ENCODE measurements at regions of chr11 and their contacts with region 1.

Region 1: GRCh38 chr11:86291466-86292262 is 10.4 kb upstream of the HIKESHI start:
- DNase-seq: peak; percentile 88
- H3K4me3 Mint-ChIP-seq: no peak overlapping the region
- H3K27ac Mint-ChIP-seq: peak overlapping the region; percentile 53
- H3K4me1 Mint-ChIP-seq: peaks cover 58% of the 10 kb centered on the region
- H3K27me3 Mint-ChIP-seq: no peaks in the 10 kb centered on the region

Region 2: DNA sequence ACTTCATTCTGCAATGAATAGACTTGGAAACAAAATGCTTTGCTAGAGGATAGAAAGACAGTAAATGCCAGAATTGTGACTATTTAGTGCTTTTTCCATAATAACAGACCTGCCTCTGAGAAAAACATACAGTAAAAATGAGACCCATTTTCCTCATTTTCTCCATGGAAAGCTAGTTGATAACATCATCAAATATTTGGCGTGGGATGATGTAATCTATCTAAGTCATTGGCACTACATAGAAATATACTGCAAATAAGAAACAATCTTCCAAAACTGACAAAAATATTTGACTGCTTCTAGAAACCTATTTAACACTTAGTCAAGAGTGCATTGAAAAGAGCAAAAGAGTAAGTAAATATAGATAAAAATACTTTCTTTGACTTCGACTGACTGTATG is 1280.5 kb before region 1 on chr11:
- CTCF ChIA-PET with region 1: no interaction called
- intact Hi-C with region 1: no loop called
- DNase-seq: no peak
- H3K4me3 Mint-ChIP-seq: no peak overlapping the region
- H3K27ac Mint-ChIP-seq: no peak overlapping the region
- H3K4me1 Mint-ChIP-seq: no peaks in the 10 kb centered on the region
- H3K27me3 Mint-ChIP-seq: no peaks in the 10 kb centered on the region

Region 3: DNA sequence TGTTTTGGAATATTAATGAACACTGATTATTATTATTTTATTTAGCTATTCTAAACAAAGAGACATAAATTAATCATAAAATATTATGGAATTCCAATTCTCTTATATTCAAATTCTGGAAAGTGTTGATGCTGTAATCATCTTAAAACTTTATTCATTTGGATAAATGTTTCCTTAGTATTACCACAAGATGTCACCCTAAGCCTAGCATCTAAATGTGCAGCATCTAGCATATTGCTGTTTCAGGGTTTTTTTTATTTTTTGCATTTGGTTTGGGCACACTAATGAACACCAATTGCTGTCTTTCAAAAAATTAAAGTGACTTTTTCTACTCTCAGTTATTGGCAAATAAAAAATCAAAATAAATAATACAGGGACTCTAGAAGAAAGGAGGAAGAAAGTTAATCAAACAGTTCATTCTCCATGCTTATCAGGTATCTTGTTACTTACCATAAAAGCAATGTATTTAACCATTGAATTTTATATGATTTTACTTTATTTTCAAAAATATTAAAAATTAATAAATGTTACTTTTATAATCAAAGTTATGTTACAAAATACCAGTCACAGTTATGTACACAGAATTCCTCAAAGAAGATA is 696.3 kb before region 1 on chr11:
- CTCF ChIA-PET with region 1: no interaction called
- intact Hi-C with region 1: loop called (anchors 1 kb)
- DNase-seq: no peak
- H3K4me3 Mint-ChIP-seq: no peak overlapping the region
- H3K27ac Mint-ChIP-seq: no peak overlapping the region
- H3K4me1 Mint-ChIP-seq: no peaks in the 10 kb centered on the region
- H3K27me3 Mint-ChIP-seq: no peaks in the 10 kb centered on the region

Region 4: GRCh38 chr11:85779956-85780640 is 511.6 kb before region 1 on chr11:
- CTCF ChIA-PET with region 1: no interaction called
- intact Hi-C with region 1: loop called (anchors 1 kb)
- DNase-seq: no peak
- H3K4me3 Mint-ChIP-seq: no peak overlapping the region
- H3K27ac Mint-ChIP-seq: no peak overlapping the region
- H3K4me1 Mint-ChIP-seq: peaks cover 25% of the 10 kb centered on the region
- H3K27me3 Mint-ChIP-seq: no peaks in the 10 kb centered on the region

Region 5: DNA sequence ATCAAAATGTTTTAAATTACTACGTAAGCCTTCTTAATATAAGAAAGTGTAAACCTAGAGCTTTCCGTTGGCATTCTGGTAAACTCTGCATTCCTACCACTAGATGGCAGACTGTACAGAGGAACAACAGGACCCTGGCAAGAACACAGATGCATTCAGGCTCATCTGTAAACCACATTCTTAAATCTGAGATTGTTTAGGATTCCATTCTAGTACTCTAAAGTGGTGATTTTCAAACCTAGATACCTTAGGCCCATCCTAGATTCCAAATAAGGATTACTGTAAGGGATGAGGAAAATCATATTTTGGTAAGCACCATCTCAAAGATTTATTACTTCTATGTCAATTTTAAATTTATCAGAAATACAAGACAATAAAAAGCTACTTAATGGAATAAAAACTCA is 249.7 kb before region 1 on chr11:
- CTCF ChIA-PET with region 1: interaction called, 13 read pairs
- intact Hi-C with region 1: loop called (anchors 1 kb)
- DNase-seq: peak; percentile 77
- H3K4me3 Mint-ChIP-seq: no peak overlapping the region
- H3K27ac Mint-ChIP-seq: peak overlapping the region; percentile 73
- H3K4me1 Mint-ChIP-seq: peaks cover 69% of the 10 kb centered on the region
- H3K27me3 Mint-ChIP-seq: no peaks in the 10 kb centered on the region

Region 6: DNA sequence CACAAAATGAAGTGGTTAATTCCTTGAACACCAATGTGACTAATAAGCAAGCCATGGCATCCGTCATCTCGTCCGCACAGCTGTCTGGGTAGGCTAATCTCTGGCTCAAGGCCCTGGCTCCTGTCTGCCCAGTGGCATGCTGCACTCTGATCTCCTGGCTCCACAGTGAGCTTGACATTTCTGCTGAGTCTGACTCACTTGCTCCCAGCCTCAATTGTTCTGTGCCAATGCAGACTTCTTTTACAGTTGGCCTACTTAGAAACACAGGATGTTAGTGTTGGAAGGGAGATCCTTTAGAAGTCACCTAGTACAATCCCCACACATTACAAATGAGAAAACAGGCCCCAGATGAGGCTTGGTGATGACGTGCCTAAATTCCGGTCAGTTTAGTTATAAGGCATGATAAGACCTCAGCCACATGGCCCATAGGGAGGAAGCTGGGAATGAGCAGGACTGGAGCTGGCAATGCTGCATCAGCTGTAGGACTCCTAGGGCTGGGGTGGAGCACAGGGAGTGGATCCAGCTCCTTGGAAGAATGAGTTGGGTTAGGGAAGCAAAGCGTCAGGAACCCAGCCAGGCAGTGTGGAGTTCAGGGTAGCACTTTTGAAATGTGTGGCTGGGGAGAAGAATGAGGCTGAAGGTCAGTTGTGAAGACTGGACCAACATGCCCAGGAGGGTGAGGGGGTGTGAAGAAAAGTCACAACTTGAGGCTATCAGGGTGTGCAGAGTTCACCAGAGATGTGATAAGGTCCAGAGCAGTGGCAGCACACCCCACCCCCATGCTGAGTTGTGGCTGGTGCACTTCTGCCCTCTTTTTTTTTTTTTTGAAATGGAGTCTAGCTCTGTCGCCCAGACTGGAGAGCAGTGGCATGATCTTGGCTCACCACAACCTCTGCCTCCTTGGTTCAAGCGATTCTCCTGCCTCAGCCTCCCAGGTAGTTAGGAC is 117.3 kb before region 1 on chr11:
- CTCF ChIA-PET with region 1: interaction called, 3 read pairs
- intact Hi-C with region 1: loop called (anchors 1 kb)
- DNase-seq: no peak
- H3K4me3 Mint-ChIP-seq: no peak overlapping the region
- H3K27ac Mint-ChIP-seq: no peak overlapping the region
- H3K4me1 Mint-ChIP-seq: peaks cover 20% of the 10 kb centered on the region
- H3K27me3 Mint-ChIP-seq: no peaks in the 10 kb centered on the region

Region 7: DNA sequence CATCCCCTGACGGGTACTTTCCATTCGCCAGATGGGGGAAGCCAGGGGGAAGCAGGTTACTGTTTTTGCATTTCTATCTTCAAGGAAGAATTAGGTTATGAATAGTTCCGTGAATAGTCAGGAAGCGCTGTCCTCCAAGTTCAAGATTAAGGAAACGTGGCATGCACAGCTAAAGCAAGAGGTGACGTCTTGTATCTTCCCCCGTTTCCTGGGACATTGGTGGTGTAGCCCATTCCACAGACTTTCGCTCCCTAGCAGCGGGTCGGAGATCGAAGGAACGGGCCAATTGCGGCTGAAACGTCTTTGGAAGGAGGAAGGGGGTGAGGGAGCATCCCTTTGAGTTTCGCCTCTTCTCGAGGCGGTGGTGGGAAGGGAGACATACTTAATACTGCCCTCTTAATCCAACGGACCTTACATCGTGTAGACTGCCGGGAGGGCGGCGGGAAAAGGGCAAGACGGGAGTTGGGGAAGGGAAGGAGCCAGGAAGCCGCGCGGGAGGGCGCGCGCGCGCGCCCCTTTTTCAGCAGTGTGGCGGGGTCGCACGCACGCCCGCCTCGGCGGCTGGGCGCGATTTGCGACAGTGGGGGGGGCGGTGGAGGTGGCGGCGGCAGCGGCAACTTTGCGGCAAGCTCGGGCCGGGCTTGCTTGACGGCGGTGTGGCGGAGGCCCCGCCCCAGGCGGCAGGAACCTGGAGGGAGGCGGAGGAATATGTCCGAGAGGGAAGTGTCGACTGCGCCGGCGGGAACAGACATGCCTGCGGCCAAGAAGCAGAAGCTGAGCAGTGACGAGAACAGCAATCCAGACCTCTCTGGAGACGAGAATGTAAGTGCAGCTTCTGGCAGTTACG is 46.9 kb before region 1 on chr11 and contains the start of gene EED:
- CTCF ChIA-PET with region 1: interaction called, 6 read pairs
- intact Hi-C with region 1: loop called (anchors 1 kb)
- DNase-seq: peak; percentile 94
- H3K4me3 Mint-ChIP-seq: no peak within 1 kb of the TSS
- H3K27ac Mint-ChIP-seq: no peak within 1 kb of the TSS
- H3K4me1 Mint-ChIP-seq: peaks cover 35% of the 10 kb centered on the region
- H3K27me3 Mint-ChIP-seq: no peaks in the 10 kb centered on the region
- total RNA-seq, gene EED: 60.4 to 61.0 TPM

Region 8: DNA sequence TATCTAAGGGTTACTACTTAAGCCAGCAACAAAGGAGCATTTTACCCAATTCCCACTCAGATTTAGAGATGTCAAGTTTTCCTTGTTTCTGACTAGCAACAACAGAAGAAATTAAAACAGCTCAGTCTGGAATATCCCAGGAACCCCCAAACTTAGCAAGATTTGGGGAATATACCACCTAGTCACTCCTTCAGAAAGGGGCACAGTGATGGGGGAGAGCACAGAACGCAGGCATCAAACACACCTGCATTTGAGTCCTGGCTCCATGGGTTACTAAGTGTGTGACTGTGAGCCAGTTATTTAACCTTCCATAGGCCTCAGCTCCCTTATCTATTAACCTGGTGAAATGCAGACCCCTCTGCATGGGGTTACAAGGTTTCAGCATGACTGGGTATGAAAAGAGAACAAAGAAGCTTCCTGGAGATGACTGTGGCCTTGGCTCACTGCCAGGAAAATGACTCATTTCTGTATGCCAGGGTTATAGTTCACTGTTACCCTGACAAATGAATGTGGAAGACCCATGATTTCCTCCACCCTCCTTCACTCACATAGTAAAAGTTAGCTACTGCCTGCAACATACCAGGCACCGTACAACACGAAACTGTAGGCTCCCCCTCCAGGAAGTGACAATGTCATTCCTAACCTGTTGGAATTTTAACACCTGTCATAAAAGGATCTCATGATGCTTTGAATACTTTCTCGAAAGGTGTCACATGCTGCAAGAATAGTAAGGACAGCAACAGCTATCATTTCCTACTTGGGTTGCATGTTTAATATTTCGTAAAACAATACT is 301.2 kb after region 1 on chr11:
- CTCF ChIA-PET with region 1: no interaction called
- intact Hi-C with region 1: loop called (anchors 1 kb)
- DNase-seq: peak; percentile 98
- H3K4me3 Mint-ChIP-seq: no peak overlapping the region
- H3K27ac Mint-ChIP-seq: peak overlapping the region; percentile 86
- H3K4me1 Mint-ChIP-seq: peaks cover 70% of the 10 kb centered on the region
- H3K27me3 Mint-ChIP-seq: no peaks in the 10 kb centered on the region